Heart right ventricle (tissue), 16 donors: ENCODE measurements at regions of chr15 and their contacts with region 1.

Region 1: DNA sequence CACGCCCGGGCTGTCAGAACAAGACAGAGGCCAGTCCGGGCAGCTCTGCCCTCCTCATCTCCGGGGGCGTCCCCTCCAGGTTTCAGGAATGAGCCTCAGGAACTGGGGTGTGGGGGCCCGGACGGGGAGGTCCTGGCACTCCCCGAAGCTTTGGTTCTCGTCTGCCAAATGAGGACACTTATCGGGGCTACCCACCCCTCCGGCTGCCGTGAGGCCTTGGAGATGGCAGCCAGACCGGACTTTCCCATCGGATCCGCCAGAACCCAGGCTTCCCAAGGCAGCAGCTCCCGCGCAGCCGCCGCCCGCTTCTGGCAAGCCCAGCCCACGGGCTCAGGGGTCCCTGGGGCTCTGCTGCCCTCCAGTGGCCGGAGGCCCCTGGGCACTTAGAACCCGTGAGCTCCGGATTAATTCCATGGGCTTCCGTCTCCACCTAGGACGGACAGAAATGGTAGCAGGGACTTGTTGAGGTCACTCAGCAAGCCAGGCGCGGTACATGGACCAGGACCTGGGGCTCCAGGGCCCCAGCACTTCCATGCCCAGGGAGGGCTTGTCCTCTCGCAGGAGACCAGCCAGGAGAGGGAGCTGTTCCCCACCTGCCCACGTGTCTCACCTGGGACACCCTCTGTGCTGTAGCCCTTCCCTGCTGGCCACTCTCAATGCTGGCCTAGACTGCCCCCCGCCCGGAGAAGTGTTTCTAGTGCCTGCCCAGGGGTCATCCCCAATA is 89.4 kb downstream of the LINGO1 start:
- DNase-seq: peak; percentile 90 to 91
- ATAC-seq: peak; percentile 88 to 93 (median 92)
- H3K4me3 ChIP-seq: peak overlapping the region in 9 of 10 donors; percentile 18 to 56 (median 49)
- H3K27ac ChIP-seq: peak overlapping the region in 9 of 10 donors; percentile 19 to 87 (median 77)
- H3K4me1 ChIP-seq: peaks cover 19 to 63% (median 47%) of the 10 kb centered on the region in 9 donors
- H3K27me3 ChIP-seq: no peaks in the 10 kb centered on the region
- CTCF ChIP-seq: peak; percentile 97 to 100 (median 98)

Region 2: DNA sequence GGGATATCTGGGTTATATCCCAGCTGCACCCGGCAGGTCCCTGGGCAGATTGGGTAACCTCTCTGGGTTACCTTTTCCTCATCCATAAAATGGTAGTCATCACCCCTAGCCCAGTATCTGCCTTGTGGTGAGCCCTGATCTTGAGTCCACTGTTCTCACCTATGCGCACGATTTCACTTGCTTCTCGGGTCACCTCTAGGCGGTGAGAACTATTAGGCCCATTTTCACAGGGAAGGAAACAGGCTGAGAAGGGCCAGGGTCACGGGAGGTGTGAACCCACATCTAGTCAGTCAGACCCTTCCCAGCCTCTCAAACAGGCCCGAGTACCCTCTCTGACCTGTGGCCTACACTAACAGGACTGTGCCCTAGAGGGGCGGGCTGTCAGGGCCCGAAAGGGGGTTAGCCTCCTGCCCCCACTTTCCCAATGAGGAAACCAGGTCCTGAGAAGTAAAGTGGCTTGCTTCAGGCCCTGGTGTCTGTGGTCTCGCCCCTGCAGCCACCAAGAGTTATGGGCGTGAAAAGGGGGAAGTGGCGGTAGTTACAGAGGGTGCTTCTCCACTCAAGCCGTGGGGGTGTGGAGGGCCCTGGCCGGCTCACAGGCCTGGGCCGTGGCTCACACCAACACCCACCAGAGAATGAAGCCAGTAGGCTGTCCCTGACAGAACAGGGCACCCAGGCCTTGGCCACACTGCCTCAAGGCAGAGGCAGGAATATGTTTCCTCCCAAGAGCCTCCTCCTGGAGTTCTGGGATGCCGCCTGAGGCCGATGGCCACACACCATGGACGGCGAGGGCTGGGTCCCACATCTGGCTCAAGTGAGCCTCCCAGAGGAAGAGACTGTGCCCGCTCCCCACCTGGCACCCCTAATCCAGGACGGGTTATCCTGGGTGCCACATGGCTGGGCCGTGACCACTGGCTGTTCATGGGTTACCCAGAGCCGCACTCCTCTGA is 528.9 kb before region 1 on chr15:
- intact Hi-C with region 1: loop called in 1 of 10 experiments (anchors 5 kb)
- DNase-seq: no peak
- ATAC-seq: peak in 5 of 8 donors; percentile 24 to 60 (median 39)
- H3K4me3 ChIP-seq: peak overlapping the region in 1 of 10 donors; percentile 19
- H3K27ac ChIP-seq: peak overlapping the region in 2 of 10 donors; percentile 15 to 85
- H3K4me1 ChIP-seq: peaks cover 0 to 85% (median 9%) of the 10 kb centered on the region in 9 donors
- H3K27me3 ChIP-seq: no peaks in the 10 kb centered on the region
- CTCF ChIP-seq: no peak

Region 3: DNA sequence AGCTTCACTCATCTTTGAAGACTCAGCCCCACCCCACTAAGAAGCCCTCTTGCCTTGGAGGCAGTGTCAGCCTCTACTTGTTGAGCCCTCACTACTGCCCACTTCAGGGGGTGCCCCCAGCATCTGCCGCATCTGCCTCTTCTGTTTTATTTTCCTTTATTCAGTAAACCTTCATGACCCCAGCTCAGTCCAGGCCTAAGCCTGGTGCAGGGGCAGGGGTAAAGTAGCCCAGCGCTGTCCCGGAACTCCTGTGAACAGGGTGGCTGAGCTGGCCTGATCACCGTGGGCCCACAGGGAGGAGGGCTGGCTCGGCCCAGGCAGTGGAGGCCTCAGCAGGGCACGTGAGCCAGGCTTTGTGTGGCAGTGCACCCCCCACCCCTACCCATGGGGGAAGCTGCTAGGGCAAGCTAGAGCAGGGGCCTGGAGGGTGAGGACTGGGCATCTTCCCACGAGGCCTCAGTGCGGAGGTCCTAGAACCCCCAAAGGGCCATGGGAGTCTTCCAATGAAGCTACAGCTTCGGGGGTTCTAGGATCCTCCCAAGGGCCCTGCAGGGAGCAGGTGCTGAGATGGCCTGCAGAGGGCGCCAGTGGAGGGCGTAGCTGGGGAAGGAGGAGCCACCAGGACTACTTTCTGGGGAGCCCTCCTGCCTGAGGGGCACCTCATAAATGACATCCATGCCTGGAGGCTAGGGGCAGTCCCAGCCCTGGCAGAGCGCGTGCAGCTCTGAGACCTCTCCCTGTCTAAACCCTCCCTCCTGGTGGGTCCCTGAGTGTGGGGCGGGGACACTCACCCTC is 508.4 kb before region 1 on chr15:
- intact Hi-C with region 1: loop called in 1 of 10 experiments (anchors 10 kb)
- DNase-seq: peak in 1 of 2 donors; percentile 42
- ATAC-seq: peak in 5 of 8 donors; percentile 7 to 45 (median 34)
- H3K4me3 ChIP-seq: no peak overlapping the region
- H3K27ac ChIP-seq: no peak overlapping the region
- H3K4me1 ChIP-seq: peaks cover 0 to 22% (median 0%) of the 10 kb centered on the region in 9 donors
- H3K27me3 ChIP-seq: peaks cover 0 to 5% (median 0%) of the 10 kb centered on the region in 7 donors
- CTCF ChIP-seq: peak in 8 of 9 donors; percentile 39 to 69 (median 68)

Region 4: DNA sequence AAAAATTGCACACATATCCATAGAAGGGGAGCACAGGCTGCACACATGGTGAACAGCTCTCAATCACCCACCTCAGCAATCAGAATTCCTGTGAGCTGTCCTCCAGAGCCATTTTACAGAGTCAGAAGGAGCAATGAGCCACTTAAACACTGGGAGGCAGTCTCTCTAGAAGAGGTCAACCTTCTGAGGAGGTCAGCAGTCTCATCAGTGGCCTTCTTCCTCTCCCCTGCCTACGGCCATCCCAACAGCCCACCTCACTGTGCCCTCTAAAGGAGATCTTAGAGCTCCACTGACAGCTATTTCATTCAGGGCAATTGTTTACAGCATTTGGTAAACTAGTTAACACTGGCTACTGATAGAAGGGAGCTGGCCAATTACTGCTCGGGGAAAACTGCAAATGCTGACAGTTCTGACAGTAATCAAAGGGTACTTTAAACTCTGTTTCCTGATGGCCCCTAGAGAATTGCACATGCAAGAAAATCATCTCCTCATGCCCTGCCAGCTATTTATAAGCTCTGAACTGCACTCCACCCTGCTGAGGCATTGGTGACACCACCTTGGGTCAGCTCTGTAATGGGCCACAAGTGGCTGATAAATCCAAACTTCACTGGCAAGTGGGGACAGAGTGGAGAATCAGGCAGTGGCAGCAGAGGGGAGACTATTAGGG is 430.4 kb before region 1 on chr15:
- intact Hi-C with region 1: loop called in 8 of 10 experiments (anchors 2 to 5 kb)
- DNase-seq: no peak
- ATAC-seq: peak in 6 of 8 donors; percentile 26 to 63 (median 36)
- H3K4me3 ChIP-seq: no peak overlapping the region
- H3K27ac ChIP-seq: peak overlapping the region in 1 of 10 donors; percentile 6
- H3K4me1 ChIP-seq: peaks cover 1 to 51% (median 11%) of the 10 kb centered on the region in 9 donors
- H3K27me3 ChIP-seq: no peaks in the 10 kb centered on the region
- CTCF ChIP-seq: no peak

Region 5: DNA sequence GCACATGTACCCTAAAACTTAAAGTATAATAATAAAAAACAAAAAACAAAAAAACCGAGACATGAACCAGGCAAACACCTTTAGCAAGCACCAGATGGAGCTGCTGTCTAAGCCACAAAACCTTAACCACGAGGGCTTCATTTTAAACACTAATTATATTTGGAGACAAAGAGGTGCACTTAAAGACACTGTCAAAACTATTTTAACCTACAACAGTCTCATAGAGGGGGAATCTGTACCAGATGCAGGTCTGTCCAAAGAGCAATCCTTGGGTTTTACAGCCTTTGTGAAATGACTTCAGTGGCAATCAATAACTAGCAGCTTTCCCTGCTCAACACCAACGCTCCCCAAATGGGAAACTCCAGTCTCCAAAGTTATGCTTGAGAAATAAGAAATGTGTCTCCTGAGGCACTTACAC is 356.7 kb before region 1 on chr15:
- intact Hi-C with region 1: loop called (anchors 1 to 5 kb)
- DNase-seq: no peak
- ATAC-seq: peak in 7 of 8 donors; percentile 33 to 64 (median 43)
- H3K4me3 ChIP-seq: no peak overlapping the region
- H3K27ac ChIP-seq: peak overlapping the region; percentile 38 to 93 (median 80)
- H3K4me1 ChIP-seq: peaks cover 5 to 70% (median 55%) of the 10 kb centered on the region in 9 donors
- H3K27me3 ChIP-seq: no peaks in the 10 kb centered on the region
- CTCF ChIP-seq: peak; percentile 38 to 81 (median 63)

Region 6: GRCh38 chr15:77507911-77508310 is 35.4 kb before region 1 on chr15:
- intact Hi-C with region 1: loop called in 4 of 10 experiments (anchors 2 to 5 kb)
- DNase-seq: peak; percentile 54 to 85
- ATAC-seq: peak; percentile 87 to 95 (median 92)
- H3K4me3 ChIP-seq: peak overlapping the region in 3 of 10 donors; percentile 2 to 25 (median 4)
- H3K27ac ChIP-seq: peak overlapping the region; percentile 89 to 98 (median 95)
- H3K4me1 ChIP-seq: peaks cover 47 to 79% (median 73%) of the 10 kb centered on the region in 9 donors
- H3K27me3 ChIP-seq: no peaks in the 10 kb centered on the region
- CTCF ChIP-seq: no peak